ENCODE measurements at regions of chr3 and their contacts with region 1.

Region 1: GRCh38 chr3:108477511-108478147 is 32.8 kb downstream of the MYH15 start:
- DNase-seq: no peak
- H3K4me3 ChIP-seq: no peak overlapping the region
- H3K27ac ChIP-seq: no peak overlapping the region
- H3K4me1 ChIP-seq: peaks cover 0 to 9% (median 5%) of the 10 kb centered on the region in 6 donors
- H3K27me3 ChIP-seq: no peaks in the 10 kb centered on the region
- CTCF ChIP-seq: peak; percentile 28 to 82 (median 71)
- POLR2A ChIP-seq: no peak

Region 2: GRCh38 chr3:107938143-107938542 is 539.5 kb before region 1 on chr3:
- intact Hi-C with region 1: loop called (anchors 5 kb)
- DNase-seq: no peak
- H3K4me3 ChIP-seq: no peak overlapping the region
- H3K27ac ChIP-seq: no peak overlapping the region
- H3K4me1 ChIP-seq: no peaks in the 10 kb centered on the region
- H3K27me3 ChIP-seq: no peaks in the 10 kb centered on the region
- CTCF ChIP-seq: peak in 6 of 11 experiments; percentile 18 to 52 (median 34)
- POLR2A ChIP-seq: no peak

Region 3: DNA sequence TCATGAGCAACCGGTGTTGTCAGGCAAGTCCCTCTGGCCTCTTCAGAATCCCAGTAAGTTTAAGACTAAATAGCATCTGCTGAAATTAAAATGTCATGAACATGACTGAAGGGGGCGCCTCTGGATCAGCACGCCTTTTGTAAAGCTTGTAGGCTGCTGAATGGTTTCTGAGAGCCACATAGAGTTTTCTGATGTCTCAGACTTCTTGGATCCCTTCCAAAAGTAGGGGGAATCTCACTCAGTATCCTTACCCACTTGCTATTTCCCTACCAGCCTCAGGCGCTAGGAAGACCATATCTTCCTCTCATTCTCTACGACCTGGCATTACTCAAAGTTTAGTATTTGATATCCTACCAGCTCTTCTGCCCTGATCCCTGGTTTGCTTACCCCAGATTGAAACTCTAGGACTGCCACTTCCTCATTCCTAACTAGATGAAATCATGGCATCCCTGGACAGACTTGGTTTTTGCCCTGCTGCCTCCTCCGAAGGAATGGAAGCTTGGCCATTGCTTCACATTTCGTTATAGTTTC is 324.1 kb before region 1 on chr3:
- intact Hi-C with region 1: loop called (anchors 5 kb)
- DNase-seq: no peak
- H3K4me3 ChIP-seq: no peak overlapping the region
- H3K27ac ChIP-seq: no peak overlapping the region
- H3K4me1 ChIP-seq: peaks cover 0 to 15% (median 0%) of the 10 kb centered on the region in 6 donors
- H3K27me3 ChIP-seq: no peaks in the 10 kb centered on the region
- CTCF ChIP-seq: peak in 5 of 11 experiments; percentile 9 to 39 (median 31)
- POLR2A ChIP-seq: no peak